Heart left ventricle (tissue), 16 donors: ENCODE measurements at regions of chr16 and their contacts with region 1.

Region 1: DNA sequence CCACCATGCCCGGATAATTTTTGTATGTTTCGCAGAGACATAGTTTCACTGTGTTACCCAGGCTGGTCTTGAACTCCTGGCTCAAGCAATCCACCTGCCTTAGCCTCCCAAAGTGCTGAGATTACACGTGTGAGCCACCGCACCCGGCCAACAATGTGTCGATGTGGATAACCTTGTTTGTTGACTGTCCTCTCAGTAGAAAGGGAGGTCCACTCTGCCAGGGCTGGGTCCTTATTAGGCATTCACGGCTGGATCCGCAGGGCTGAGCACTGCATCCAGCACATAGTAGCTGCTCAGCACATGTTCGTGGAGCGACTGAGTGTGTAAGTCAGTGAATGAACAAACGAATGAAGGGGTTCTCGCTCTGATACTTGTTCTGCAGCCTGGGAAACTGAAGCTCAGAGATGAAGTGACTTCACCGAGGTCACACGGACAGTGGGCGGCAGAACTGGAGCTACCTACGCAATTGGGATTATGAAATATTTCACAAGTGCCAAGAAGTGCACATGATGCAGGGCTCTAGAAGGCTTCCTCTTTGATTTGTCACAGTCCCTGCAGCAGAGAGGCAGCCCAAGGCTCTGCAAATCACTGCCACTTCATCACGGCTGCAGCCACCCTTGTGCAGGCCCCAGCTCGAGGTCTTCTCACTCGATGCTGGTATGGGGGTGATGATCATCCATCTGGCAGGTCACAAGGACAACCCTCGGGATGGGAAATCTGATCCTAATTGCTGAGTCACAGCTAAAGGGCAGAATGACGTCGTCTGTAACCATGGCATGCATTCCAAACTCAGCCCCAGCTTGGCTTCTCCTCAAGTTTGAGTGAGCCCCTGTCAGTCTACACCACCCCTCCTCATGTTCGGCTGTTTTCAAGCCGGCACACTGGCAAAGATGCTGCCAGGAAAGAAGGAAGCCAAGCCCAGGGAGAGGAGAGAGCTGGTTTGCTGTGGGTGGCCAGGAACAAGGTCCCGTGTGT is 28.0 kb upstream of the SNN start:
- DNase-seq: peak; percentile 80 to 94 (median 85)
- ATAC-seq: peak; percentile 91 to 96 (median 94)
- H3K4me3 ChIP-seq: no peak overlapping the region
- H3K27ac ChIP-seq: peak overlapping the region; percentile 69 to 95 (median 88)
- H3K4me1 ChIP-seq: peaks cover 0 to 22% (median 14%) of the 10 kb centered on the region in 12 donors
- H3K27me3 ChIP-seq: no peaks in the 10 kb centered on the region
- CTCF ChIP-seq: no peak
- POLR2A ChIP-seq: peak in 1 of 2 donors; percentile 36

Region 2: GRCh38 chr16:11396241-11397048 is 243.8 kb before region 1 on chr16:
- intact Hi-C with region 1: loop called in 1 of 10 experiments (anchors 5 kb)
- DNase-seq: peak; percentile 71 to 83 (median 76)
- ATAC-seq: peak; percentile 63 to 84 (median 84)
- H3K4me3 ChIP-seq: no peak overlapping the region
- H3K27ac ChIP-seq: peak overlapping the region in 3 of 12 donors; percentile 25 to 54 (median 30)
- H3K4me1 ChIP-seq: peaks cover 0 to 7% (median 2%) of the 10 kb centered on the region in 12 donors
- H3K27me3 ChIP-seq: peaks cover 0 to 3% (median 0%) of the 10 kb centered on the region in 9 donors
- CTCF ChIP-seq: peak; percentile 96 to 100 (median 98)
- POLR2A ChIP-seq: no peak

Region 3: GRCh38 chr16:11506741-11507305 is 133.4 kb before region 1 on chr16:
- intact Hi-C with region 1: loop called in 1 of 10 experiments (anchors 10 kb)
- DNase-seq: no peak
- ATAC-seq: peak in 1 of 4 donors; percentile 26
- H3K4me3 ChIP-seq: peak overlapping the region in 1 of 12 donors; percentile 21
- H3K27ac ChIP-seq: no peak overlapping the region
- H3K4me1 ChIP-seq: no peaks in the 10 kb centered on the region
- H3K27me3 ChIP-seq: no peaks in the 10 kb centered on the region
- CTCF ChIP-seq: no peak
- POLR2A ChIP-seq: no peak

Region 4: GRCh38 chr16:11535471-11535870 is 104.7 kb before region 1 on chr16:
- intact Hi-C with region 1: loop called in 9 of 10 experiments (anchors 2 to 10 kb)
- DNase-seq: no peak
- ATAC-seq: no peak
- H3K4me3 ChIP-seq: no peak overlapping the region
- H3K27ac ChIP-seq: no peak overlapping the region
- H3K4me1 ChIP-seq: peaks cover 0 to 8% (median 0%) of the 10 kb centered on the region in 12 donors
- H3K27me3 ChIP-seq: no peaks in the 10 kb centered on the region
- CTCF ChIP-seq: no peak
- POLR2A ChIP-seq: no peak

Region 5: GRCh38 chr16:11706180-11706742 is 66.0 kb after region 1 on chr16:
- intact Hi-C with region 1: loop called in 3 of 10 experiments (anchors 2 to 10 kb)
- DNase-seq: peak in 3 of 5 donors; percentile 17 to 78 (median 59)
- ATAC-seq: peak; percentile 94 to 98 (median 97)
- H3K4me3 ChIP-seq: no peak overlapping the region
- H3K27ac ChIP-seq: peak overlapping the region; percentile 1 to 83 (median 62)
- H3K4me1 ChIP-seq: peaks cover 0 to 45% (median 18%) of the 10 kb centered on the region in 12 donors
- H3K27me3 ChIP-seq: no peaks in the 10 kb centered on the region
- CTCF ChIP-seq: no peak
- POLR2A ChIP-seq: no peak